ENCODE measurements at regions of chr9 and their contacts with region 1.

Region 1: GRCh38 chr9:112898872-112899311 is 8.2 kb upstream of the SLC46A2 start:
- DNase-seq: no peak
- H3K4me3 Mint-ChIP-seq: no peak overlapping the region
- H3K27ac Mint-ChIP-seq: no peak overlapping the region
- H3K4me1 Mint-ChIP-seq: peaks cover 22% of the 10 kb centered on the region
- H3K27me3 Mint-ChIP-seq: peaks cover 39% of the 10 kb centered on the region

Region 2: DNA sequence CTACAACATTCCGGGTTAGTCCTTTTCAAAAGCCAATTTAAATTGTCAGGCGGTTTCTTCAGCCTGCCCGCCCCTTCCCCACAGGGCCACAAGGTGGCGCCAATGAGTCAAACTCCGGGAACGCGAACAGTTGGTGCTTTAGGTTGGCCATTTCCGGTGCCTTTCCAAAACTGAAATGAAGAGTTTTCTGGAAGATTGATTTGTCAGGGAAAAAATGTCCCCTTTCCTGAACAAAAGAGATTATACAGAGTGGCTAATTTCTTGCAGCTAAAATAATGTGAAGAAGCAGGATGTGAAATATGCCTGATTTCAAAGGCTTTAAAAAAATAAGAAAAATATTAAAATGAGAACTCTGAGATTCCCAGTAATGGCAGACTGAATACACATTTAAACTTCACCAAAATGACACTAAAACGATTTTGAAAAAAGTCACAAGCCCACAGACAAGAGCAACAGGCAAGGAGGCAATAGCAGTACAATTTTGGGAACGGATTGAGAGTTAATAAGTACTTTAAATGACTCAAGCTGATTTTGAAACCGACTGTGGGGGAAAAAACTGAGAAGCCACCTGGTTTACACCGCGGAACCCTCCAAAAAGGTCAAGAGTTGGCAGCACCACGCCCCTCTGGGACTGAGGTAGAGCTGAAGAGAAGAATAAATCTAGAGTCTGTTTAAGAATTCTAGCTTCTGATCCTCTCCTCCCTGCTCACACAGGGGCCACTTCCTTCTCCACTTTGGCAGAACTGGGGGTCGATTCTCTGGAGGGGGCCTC is 53.9 kb before region 1 on chr9:
- intact Hi-C with region 1: loop called (anchors 1 kb)
- DNase-seq: peak; percentile 92
- H3K4me3 Mint-ChIP-seq: no peak overlapping the region
- H3K27ac Mint-ChIP-seq: no peak overlapping the region
- H3K4me1 Mint-ChIP-seq: peaks cover 14% of the 10 kb centered on the region
- H3K27me3 Mint-ChIP-seq: no peaks in the 10 kb centered on the region